Caco-2 (cell line): ENCODE measurements at regions of chr4 and their contacts with region 1.

Region 1: GRCh38 chr4:140326395-140326993 is 47.0 kb upstream of the SCOC start:
- DNase-seq: peak in 1 of 2 experiments; percentile 42
- H3K4me3 ChIP-seq: no peak overlapping the region
- H3K4me3 Mint-ChIP-seq: no peak overlapping the region
- H3K27ac Mint-ChIP-seq: no peak overlapping the region
- H3K4me1 ChIP-seq: no peaks in the 10 kb centered on the region
- H3K4me1 Mint-ChIP-seq: no peaks in the 10 kb centered on the region
- H3K27me3 ChIP-seq: no peaks in the 10 kb centered on the region
- H3K27me3 Mint-ChIP-seq: no peaks in the 10 kb centered on the region
- CTCF ChIP-seq: peak; percentile 59 to 78

Region 2: GRCh38 chr4:139642364-139642763 is 684.1 kb before region 1 on chr4:
- CTCF ChIA-PET with region 1: interaction called, 13 read pairs
- POLR2A ChIA-PET with region 1: no interaction called
- intact Hi-C with region 1: no loop called
- DNase-seq: peak in 1 of 2 experiments; percentile 26
- H3K4me3 ChIP-seq: no peak overlapping the region
- H3K4me3 Mint-ChIP-seq: no peak overlapping the region
- H3K27ac Mint-ChIP-seq: no peak overlapping the region
- H3K4me1 ChIP-seq: peaks cover 9% of the 10 kb centered on the region
- H3K4me1 Mint-ChIP-seq: peaks cover 19% of the 10 kb centered on the region
- H3K27me3 ChIP-seq: no peaks in the 10 kb centered on the region
- H3K27me3 Mint-ChIP-seq: no peaks in the 10 kb centered on the region
- CTCF ChIP-seq: no peak

Region 3: GRCh38 chr4:139734875-139735380 is 591.6 kb before region 1 on chr4:
- CTCF ChIA-PET with region 1: interaction called, 10 read pairs
- POLR2A ChIA-PET with region 1: no interaction called
- intact Hi-C with region 1: loop called (anchors 1 kb)
- DNase-seq: peak; percentile 82 to 89
- H3K4me3 ChIP-seq: peak overlapping the region; percentile 29
- H3K4me3 Mint-ChIP-seq: peak overlapping the region; percentile 69
- H3K27ac Mint-ChIP-seq: peak overlapping the region; percentile 78
- H3K4me1 ChIP-seq: peaks cover 39% of the 10 kb centered on the region
- H3K4me1 Mint-ChIP-seq: peaks cover 22% of the 10 kb centered on the region
- H3K27me3 ChIP-seq: no peaks in the 10 kb centered on the region
- H3K27me3 Mint-ChIP-seq: no peaks in the 10 kb centered on the region
- CTCF ChIP-seq: peak; percentile 76 to 82

Region 4: GRCh38 chr4:140049024-140049848 is 277.3 kb before region 1 on chr4:
- CTCF ChIA-PET with region 1: no interaction called
- POLR2A ChIA-PET with region 1: no interaction called
- intact Hi-C with region 1: loop called (anchors 5 kb)
- DNase-seq: peak; percentile 76 to 80
- H3K4me3 ChIP-seq: peak overlapping the region; percentile 21
- H3K4me3 Mint-ChIP-seq: peak overlapping the region; percentile 79
- H3K27ac Mint-ChIP-seq: peak overlapping the region; percentile 96
- H3K4me1 ChIP-seq: peaks cover 58% of the 10 kb centered on the region
- H3K4me1 Mint-ChIP-seq: peaks cover 51% of the 10 kb centered on the region
- H3K27me3 ChIP-seq: no peaks in the 10 kb centered on the region
- H3K27me3 Mint-ChIP-seq: no peaks in the 10 kb centered on the region
- CTCF ChIP-seq: peak in 1 of 2 experiments; percentile 44

Region 5: DNA sequence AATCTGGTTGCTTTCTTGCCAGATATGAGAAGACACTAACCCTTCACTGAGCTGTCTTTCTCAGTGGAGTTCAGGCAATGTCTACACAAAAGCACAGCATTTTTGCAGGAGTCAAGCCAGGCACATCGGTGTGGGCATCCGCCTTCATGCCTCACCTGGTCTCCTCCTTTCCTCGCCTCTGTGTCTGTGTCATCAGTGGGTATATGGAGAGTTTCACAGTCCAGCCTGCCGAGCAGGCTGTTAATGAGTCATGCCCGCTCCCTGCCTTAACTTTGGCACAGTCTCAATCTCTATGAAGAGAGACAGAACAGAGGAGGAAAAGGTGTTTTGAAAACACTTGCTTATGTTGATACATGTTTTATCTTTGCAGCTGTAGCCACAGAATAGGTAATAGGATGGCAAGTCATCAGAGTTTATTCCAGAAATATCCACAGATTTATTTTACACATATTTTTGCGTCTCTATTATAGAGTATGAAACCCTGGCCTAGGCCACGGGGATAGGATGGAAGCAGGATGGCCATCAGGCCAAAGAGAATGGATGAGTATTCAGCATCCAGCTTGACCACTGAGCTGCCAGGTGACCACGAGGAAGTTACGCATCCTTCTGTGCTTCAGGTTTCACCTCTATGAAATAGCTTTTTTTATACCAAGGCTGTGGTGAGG is 139.7 kb before region 1 on chr4:
- CTCF ChIA-PET with region 1: no interaction called
- POLR2A ChIA-PET with region 1: no interaction called
- intact Hi-C with region 1: no loop called
- DNase-seq: no peak
- H3K4me3 ChIP-seq: no peak overlapping the region
- H3K4me3 Mint-ChIP-seq: no peak overlapping the region
- H3K27ac Mint-ChIP-seq: no peak overlapping the region
- H3K4me1 ChIP-seq: no peaks in the 10 kb centered on the region
- H3K4me1 Mint-ChIP-seq: no peaks in the 10 kb centered on the region
- H3K27me3 ChIP-seq: no peaks in the 10 kb centered on the region
- H3K27me3 Mint-ChIP-seq: no peaks in the 10 kb centered on the region
- CTCF ChIP-seq: no peak

Region 6: GRCh38 chr4:140252742-140253555 is 73.5 kb before region 1 on chr4:
- CTCF ChIA-PET with region 1: interaction called, 3 read pairs
- POLR2A ChIA-PET with region 1: no interaction called
- intact Hi-C with region 1: loop called (anchors 1 kb)
- DNase-seq: peak; percentile 82 to 87
- H3K4me3 ChIP-seq: peak overlapping the region; percentile 66
- H3K4me3 Mint-ChIP-seq: peak overlapping the region; percentile 0
- H3K27ac Mint-ChIP-seq: peak overlapping the region; percentile 88
- H3K4me1 ChIP-seq: peaks cover 58% of the 10 kb centered on the region
- H3K4me1 Mint-ChIP-seq: peaks cover 26% of the 10 kb centered on the region
- H3K27me3 ChIP-seq: no peaks in the 10 kb centered on the region
- H3K27me3 Mint-ChIP-seq: no peaks in the 10 kb centered on the region
- CTCF ChIP-seq: peak; percentile 79 to 90

Region 7: DNA sequence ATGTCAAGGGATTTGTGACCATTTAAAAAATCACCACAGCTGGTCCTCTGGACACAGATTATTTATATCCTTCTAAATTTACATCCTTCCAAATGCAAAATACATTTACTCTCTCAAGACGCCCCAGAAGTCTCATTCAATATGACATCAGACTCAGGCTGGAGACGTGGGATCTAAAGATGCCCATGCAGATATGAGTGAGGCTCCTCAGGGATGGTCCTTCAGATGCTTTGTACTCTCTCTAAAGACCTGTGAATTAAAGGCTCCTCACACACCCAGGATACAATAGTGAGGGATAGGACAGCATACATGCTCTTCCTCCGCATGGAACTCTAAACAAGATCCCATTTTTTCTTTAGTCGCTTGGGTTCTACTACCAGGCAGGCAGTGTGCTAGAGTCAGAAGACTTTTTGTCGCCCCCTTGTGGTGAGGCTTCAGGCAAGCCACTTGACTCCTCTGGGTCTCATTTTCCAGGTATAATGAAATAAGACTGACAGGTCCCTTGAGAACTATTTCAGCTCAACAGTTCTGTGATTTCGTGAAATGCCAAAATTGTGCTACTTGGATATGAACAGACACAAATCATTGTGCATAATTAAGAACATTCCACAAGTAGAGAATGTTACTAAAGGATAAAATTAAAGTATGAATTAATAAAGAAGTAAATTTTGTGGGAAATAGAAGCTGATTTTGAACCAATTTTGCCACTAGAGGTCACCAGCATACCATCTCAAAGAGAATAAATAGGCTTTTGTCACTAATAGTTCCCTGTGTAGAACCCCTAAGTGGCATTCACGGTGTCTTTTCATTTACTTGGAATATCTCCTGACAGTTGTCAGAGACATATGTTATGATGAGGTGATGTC is 33.3 kb after region 1 on chr4:
- CTCF ChIA-PET with region 1: interaction called, 20 read pairs
- POLR2A ChIA-PET with region 1: no interaction called
- intact Hi-C with region 1: loop called (anchors 1 kb)
- DNase-seq: peak; percentile 79 to 83
- H3K4me3 ChIP-seq: no peak overlapping the region
- H3K4me3 Mint-ChIP-seq: no peak overlapping the region
- H3K27ac Mint-ChIP-seq: no peak overlapping the region
- H3K4me1 ChIP-seq: peaks cover 24% of the 10 kb centered on the region
- H3K4me1 Mint-ChIP-seq: peaks cover 13% of the 10 kb centered on the region
- H3K27me3 ChIP-seq: no peaks in the 10 kb centered on the region
- H3K27me3 Mint-ChIP-seq: no peaks in the 10 kb centered on the region
- CTCF ChIP-seq: peak; percentile 67 to 80

Region 8: DNA sequence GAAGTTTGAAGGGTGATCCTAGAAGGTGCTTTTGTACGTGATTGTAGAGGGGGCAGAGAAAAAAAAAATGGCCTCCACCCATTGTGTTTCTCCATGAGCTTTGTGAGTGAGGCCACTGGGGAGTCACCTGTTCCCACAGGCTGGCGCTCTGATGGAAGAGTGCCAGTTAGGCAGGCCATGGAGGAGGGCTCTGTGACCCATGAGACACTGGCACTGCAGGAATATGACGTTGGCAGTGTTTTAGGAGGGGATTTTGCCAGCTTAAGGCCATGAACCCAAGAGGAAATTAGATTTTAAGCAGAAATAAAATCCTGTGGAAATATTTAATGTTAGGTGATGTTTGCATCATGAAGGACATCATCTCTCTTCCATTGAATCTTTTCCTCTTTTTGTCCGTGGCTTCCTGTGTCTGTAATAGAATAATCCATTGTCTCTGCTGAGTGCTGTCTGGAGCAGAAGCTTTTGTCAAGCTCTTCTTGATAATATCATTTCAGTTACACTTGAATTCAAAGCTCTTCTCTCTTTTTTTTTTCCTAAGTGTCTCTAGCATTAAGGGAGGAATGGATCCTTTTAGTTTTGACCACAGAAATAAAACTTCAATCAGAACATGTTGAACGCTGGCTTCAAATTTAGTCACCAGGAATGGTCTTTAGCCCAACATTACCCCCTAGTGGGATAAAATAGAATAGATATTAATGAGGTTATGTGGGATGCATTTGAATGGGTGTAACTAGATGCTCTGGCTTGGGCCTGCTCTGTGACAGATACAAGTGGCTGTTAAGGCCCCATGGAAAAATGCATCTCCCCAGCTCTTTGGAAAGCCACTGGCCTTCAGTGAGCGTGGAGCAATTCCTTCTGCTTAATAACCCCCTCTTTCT is 283.3 kb after region 1 on chr4:
- CTCF ChIA-PET with region 1: interaction called, 4 read pairs
- POLR2A ChIA-PET with region 1: no interaction called
- intact Hi-C with region 1: loop called (anchors 1 kb)
- DNase-seq: peak in 1 of 2 experiments; percentile 47
- H3K4me3 ChIP-seq: no peak overlapping the region
- H3K4me3 Mint-ChIP-seq: no peak overlapping the region
- H3K27ac Mint-ChIP-seq: no peak overlapping the region
- H3K4me1 ChIP-seq: peaks cover 10% of the 10 kb centered on the region
- H3K4me1 Mint-ChIP-seq: no peaks in the 10 kb centered on the region
- H3K27me3 ChIP-seq: no peaks in the 10 kb centered on the region
- H3K27me3 Mint-ChIP-seq: no peaks in the 10 kb centered on the region
- CTCF ChIP-seq: peak; percentile 39 to 40